ENCODE measurements at regions of chr12 and their contacts with region 1.

Region 1: DNA sequence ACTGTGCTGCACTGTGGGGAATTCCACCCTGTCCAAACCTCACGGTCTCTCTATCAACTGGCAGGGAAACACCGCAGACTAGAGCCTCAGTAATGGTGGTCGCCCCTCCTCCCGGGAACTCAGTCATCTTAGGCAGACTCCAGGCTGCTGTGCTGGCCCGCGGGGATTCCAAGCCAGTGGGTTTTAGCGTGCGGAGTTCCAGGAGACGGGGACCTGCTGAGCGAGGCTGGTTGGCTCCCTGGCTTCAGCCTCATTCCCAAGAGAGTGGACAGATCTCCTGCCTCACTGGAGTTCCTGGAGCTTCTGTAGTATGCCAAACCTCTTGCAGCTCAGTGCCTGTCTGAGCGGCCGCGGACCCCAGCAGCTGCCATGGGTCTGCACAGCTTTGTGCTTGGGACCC is 455.6 kb downstream of the CCDC91 start:
- DNase-seq: no peak
- ATAC-seq: no peak
- H3K4me3 Mint-ChIP-seq: no peak overlapping the region
- H3K27ac Mint-ChIP-seq: no peak overlapping the region
- H3K4me1 Mint-ChIP-seq: no peaks in the 10 kb centered on the region
- H3K27me3 Mint-ChIP-seq: no peaks in the 10 kb centered on the region
- CTCF ChIP-seq: no peak

Region 2: GRCh38 chr12:28130625-28131598 is 515.0 kb before region 1 on chr12:
- CTCF ChIA-PET with region 1: no interaction called
- POLR2A ChIA-PET with region 1: no interaction called
- intact Hi-C with region 1: loop called (anchors 10 kb)
- DNase-seq: no peak
- ATAC-seq: no peak
- H3K4me3 Mint-ChIP-seq: no peak overlapping the region
- H3K27ac Mint-ChIP-seq: no peak overlapping the region
- H3K4me1 Mint-ChIP-seq: no peaks in the 10 kb centered on the region
- H3K27me3 Mint-ChIP-seq: no peaks in the 10 kb centered on the region
- CTCF ChIP-seq: no peak

Region 3: DNA sequence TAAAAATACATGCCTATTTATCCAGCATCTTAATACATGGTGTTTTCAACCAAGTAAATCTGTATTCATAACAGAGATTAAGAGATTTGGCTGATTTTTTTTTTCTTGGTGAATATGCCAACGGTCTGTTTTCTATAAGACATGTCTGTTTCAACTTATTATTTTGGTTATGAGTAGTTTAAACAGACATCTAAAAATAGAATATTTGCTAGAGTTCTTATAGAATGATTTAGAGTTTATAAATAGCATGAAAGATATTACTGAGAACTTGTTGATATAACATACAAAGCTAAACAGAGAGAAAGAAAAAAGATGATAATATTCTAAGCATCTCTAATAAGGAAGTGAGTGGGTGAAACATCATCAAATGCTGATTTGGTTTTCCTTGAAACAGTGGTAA is 255.7 kb before region 1 on chr12:
- CTCF ChIA-PET with region 1: no interaction called
- POLR2A ChIA-PET with region 1: no interaction called
- intact Hi-C with region 1: no loop called
- DNase-seq: no peak
- ATAC-seq: no peak
- H3K4me3 Mint-ChIP-seq: no peak overlapping the region
- H3K27ac Mint-ChIP-seq: no peak overlapping the region
- H3K4me1 Mint-ChIP-seq: no peaks in the 10 kb centered on the region
- H3K27me3 Mint-ChIP-seq: no peaks in the 10 kb centered on the region
- CTCF ChIP-seq: no peak

Region 4: GRCh38 chr12:28987538-28988324 is 341.8 kb after region 1 on chr12:
- CTCF ChIA-PET with region 1: no interaction called
- POLR2A ChIA-PET with region 1: no interaction called
- intact Hi-C with region 1: no loop called
- DNase-seq: no peak
- ATAC-seq: no peak
- H3K4me3 Mint-ChIP-seq: no peak overlapping the region
- H3K27ac Mint-ChIP-seq: no peak overlapping the region
- H3K4me1 Mint-ChIP-seq: no peaks in the 10 kb centered on the region
- H3K27me3 Mint-ChIP-seq: no peaks in the 10 kb centered on the region
- CTCF ChIP-seq: no peak

Measured in activated B cell treated with CpG ODN at 0.5 μM for 24 hours (primary cell).